ENCODE measurements at regions of chr11 and their contacts with region 1.

Region 1: DNA sequence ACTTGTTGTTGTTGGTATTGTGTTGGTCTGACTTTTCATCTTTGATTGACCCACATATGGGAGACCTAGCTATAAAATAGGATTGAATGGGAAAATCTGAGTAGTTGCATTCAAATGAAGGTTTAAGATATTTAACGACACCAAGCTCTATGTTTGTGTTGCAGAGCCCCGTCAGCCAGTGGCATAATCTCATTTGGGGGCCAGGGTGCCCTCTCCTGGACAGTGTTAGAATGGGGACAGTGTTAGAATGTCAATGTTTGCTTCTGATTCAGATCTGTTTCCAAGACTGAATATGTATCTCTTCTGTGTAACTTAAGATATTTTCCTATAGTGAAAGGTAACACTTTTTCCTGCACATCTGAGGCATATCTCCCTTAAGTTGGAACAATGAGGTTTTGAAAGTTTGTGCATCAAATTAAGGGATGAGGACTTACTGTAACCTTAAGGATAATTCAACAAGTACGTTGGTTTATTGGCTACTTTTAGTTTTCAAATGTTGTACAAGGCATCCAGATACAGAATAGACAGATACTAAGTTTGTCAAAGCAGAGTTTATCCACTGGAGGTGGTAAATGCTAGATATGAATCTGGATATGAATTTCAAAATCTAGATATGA is 5.3 kb upstream of the OR52M1 start:
- H3K4me3 ChIP-seq: no peak overlapping the region
- H3K27ac ChIP-seq: no peak overlapping the region
- H3K4me1 ChIP-seq: no peaks in the 10 kb centered on the region
- CTCF ChIP-seq: peak; percentile 26; the same call in 1 of the 2 replicates

Region 2: GRCh38 chr11:4074301-4074701 is 465.4 kb before region 1 on chr11:
- CTCF ChIA-PET with region 1: no interaction called
- POLR2A ChIA-PET with region 1: no interaction called
- H3K4me3 ChIP-seq: no peak overlapping the region
- H3K27ac ChIP-seq: no peak overlapping the region
- H3K4me1 ChIP-seq: peaks cover 4% of the 10 kb centered on the region; the same call in 1 of the 2 replicates
- CTCF ChIP-seq: no peak

Region 3: GRCh38 chr11:4181782-4182721 is 357.7 kb before region 1 on chr11:
- CTCF ChIA-PET with region 1: interaction called, 111 read pairs
- POLR2A ChIA-PET with region 1: interaction called, 3 read pairs
- H3K4me3 ChIP-seq: no peak overlapping the region
- H3K27ac ChIP-seq: no peak overlapping the region
- H3K4me1 ChIP-seq: no peaks in the 10 kb centered on the region
- CTCF ChIP-seq: peak; percentile 83

Region 4: DNA sequence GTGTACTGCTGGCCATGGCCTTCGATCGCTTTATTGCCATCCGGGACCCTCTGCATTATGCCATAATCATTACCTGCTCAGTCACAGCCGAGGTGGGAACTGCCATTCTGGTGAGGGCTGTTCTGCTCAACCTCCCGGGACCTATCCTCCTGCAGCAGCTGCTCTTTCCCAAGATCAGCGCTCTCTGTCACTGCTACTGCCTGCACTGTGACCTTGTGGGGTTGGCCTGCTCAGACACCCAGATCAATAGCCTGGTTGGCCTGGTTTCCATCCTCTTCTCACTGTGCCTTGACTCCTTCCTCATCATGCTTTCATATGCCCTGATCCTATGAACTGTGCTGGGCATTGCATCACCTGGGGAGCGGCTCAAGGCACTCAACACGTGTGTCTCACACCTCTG is 121.3 kb before region 1 on chr11:
- CTCF ChIA-PET with region 1: no interaction called
- POLR2A ChIA-PET with region 1: no interaction called
- H3K4me3 ChIP-seq: no peak overlapping the region
- H3K27ac ChIP-seq: no peak overlapping the region
- H3K4me1 ChIP-seq: no peaks in the 10 kb centered on the region
- CTCF ChIP-seq: no peak

Region 5: DNA sequence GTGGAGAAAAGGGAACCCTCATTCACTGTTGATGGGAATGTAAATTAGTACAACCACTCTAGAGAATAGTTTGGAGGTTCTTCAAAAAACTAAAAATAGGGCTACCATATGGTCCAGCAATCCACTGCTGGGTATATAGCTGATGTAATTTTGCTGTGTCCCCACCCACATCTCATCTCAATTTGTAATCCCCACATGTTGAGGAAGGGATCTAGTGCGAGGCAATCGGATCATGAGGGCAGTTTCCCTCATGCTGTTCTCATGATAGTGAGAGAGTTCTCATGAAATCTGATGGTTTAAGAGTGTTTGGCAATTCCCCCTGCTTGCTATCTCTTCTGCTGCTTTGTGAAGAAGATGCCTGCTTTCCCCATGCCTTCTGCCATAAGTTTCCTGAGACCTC is 11.8 kb before region 1 on chr11:
- CTCF ChIA-PET with region 1: interaction called, 20 read pairs
- POLR2A ChIA-PET with region 1: no interaction called
- H3K4me3 ChIP-seq: no peak overlapping the region
- H3K27ac ChIP-seq: no peak overlapping the region
- H3K4me1 ChIP-seq: no peaks in the 10 kb centered on the region
- CTCF ChIP-seq: no peak

Region 6: DNA sequence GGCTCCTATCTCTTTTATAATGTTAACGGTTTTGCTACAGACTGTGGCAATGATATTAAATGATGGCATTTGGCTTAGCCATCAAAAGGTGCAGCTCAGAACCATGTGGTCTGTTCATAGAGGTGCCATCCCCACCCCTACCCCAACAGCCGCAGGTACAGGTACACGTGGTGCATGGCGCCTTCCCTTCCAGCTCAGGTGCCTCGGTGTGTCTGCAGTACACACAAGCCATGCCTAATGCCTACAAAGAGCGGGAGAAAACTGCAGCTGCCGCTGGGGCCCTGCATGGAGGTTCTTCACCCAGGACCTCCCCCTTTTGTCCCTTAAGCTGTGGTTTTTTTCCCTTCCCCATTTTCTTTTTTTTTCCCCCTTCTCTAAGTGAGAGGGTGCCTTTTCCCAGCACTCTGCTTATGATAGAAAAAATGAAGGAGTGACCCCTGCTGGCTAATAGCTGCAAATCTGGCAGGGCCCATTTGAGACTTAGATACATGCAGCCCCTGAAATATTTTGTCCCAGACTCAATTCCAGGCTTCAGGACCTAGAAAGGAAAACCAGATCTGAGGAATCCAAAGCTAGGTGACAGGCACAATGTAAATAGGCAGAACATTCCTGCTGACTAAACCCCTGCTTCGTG is 11.8 kb after region 1 on chr11:
- CTCF ChIA-PET with region 1: interaction called, 13 read pairs
- POLR2A ChIA-PET with region 1: no interaction called
- H3K4me3 ChIP-seq: no peak overlapping the region
- H3K27ac ChIP-seq: no peak overlapping the region
- H3K4me1 ChIP-seq: no peaks in the 10 kb centered on the region
- CTCF ChIP-seq: no peak